ENCODE measurements at regions of chr10 and their contacts with region 1.

Region 1: DNA sequence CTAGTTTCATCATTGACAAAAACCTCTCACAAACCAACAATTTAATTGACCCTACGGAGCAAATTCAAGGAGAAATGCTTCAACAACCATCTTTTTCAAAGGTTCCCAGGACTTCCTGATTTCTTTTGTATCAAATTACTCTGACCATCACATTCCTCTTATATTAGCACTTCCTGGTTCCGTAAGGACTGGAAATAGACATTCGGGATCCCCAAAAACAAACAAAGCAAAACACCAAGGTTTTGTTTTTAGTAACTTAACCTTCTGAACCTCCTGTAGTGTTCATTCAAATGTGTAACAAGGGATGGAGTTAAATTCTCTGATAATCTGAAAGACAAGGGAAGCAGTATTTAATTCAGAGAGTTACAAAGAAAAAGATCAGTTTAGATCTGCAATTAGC is 387.6 kb upstream of the NRP1 start:
- DNase-seq: no peak
- ATAC-seq: no peak
- H3K4me3 ChIP-seq: no peak overlapping the region
- H3K27ac ChIP-seq: no peak overlapping the region
- H3K4me1 ChIP-seq: peaks cover 13% of the 10 kb centered on the region; the same call in 1 of the 2 replicates
- H3K27me3 ChIP-seq: 0 out of 5 replicates have a peak, but pooled peaks cover 0 to 5% of the 10 kb centered on the region in 2 experiments
- CTCF ChIP-seq: no peak
- EP300 ChIP-seq: no peak
- POLR2A ChIP-seq: no peak
- RAD21 ChIP-seq: no peak

Region 2: DNA sequence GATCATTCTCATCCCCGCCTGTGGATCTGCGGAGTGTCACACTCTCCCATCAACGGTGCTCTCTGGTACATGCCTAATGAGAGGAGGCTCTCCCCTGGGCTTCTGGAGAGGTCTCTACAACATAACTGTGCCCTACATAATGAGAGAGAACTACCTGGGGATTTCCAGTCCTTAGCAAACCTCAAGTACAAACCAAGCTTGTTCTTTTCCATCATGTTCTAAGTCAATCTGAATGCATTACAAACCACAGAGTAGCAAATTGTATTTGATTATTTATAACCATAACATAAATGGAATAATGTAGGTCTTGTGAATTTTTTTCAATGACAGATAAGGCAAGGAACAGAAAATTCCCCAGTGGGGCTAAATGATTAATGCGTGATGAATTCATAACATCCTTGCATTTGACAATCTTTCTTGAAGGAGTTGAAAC is 24.8 kb after region 1 on chr10:
- CTCF ChIA-PET with region 1: no interaction called
- POLR2A ChIA-PET with region 1: no interaction called
- in situ Hi-C with region 1: no loop called
- intact Hi-C with region 1: loop called (anchors 1 kb)
- DNase-seq: no peak
- ATAC-seq: no peak
- H3K4me3 ChIP-seq: no peak overlapping the region
- H3K27ac ChIP-seq: no peak overlapping the region
- H3K4me1 ChIP-seq: no peaks in the 10 kb centered on the region
- H3K27me3 ChIP-seq: no peaks in the 10 kb centered on the region
- CTCF ChIP-seq: no peak
- EP300 ChIP-seq: no peak
- POLR2A ChIP-seq: no peak
- RAD21 ChIP-seq: no peak

Measured in HepG2 (cell line).